Aorta (tissue), 5 donors: ENCODE measurements at regions of chr15 and their contacts with region 1.

Region 1: DNA sequence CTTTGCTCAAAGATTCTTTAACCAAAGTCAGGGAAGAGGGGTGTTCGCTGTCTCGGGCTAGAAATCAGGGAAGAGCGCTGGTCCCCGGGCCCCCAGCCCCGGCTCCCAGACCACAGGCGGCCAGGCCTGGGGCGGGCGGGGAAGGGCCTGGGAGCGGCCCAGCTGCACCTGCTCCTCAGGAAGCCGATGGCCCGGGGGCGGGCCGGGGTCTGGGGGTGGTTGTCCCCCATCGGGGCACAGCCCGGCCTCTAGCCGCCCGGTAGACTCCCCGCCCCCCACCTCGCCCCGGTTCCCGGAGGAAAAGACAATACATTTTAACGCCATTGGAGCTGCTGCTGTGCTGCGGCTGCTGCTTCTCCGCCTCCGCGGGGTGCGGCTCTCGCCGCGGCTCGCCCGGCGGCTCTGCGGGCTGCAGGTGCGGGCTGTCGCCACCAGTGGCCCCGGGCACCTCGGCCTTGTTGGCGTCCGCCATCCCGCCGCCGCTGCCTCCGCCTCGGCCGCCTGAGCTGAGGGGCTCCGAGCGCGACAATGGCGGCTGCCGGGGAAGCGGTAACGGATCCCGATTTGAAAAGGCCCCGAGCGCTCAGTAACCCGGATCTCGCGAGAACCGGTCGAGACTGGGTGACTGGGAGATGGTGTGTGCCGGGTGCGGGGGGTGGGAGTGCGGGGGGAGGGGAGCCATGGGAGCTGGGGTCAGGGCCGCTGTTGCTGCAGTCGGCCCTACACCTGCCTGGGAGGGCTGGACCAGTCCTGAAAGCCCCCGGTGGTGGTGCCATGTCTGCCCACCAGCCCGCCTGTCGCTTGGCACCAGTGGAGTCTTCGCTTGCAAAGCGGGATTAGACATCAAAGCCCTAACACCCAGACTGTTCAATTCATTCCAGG is at the start of gene MYEF2:
- DNase-seq: peak; percentile 84 to 92
- ATAC-seq: peak; percentile 89
- H3K4me3 ChIP-seq: peak within 1 kb of the TSS; percentile 65 to 88
- H3K27ac ChIP-seq: peak within 1 kb of the TSS; percentile 84 to 88
- H3K4me1 ChIP-seq: no peaks in the 10 kb centered on the region
- H3K27me3 ChIP-seq: no peaks in the 10 kb centered on the region
- total RNA-seq, gene MYEF2: 73.0 to 105 TPM

Region 2: GRCh38 chr15:48330855-48331795 is 153.1 kb after region 1 on chr15 and contains the start of gene DUT:
- intact Hi-C with region 1: loop called in 1 of 2 experiments (anchors 10 kb)
- DNase-seq: peak; percentile 92 to 95
- ATAC-seq: peak; percentile 97
- H3K4me3 ChIP-seq: peak within 1 kb of the TSS; percentile 58 to 82
- H3K27ac ChIP-seq: peak within 1 kb of the TSS; percentile 62 to 74
- H3K4me1 ChIP-seq: no peaks in the 10 kb centered on the region
- H3K27me3 ChIP-seq: no peaks in the 10 kb centered on the region
- total RNA-seq, gene DUT: 54.8 to 77.7 TPM